ENCODE measurements at regions of chr1 and their contacts with region 1.

Region 1: GRCh38 chr1:54791880-54792522 is 9.1 kb downstream of the TTC22 start:
- DNase-seq: no peak
- H3K4me3 ChIP-seq: no peak overlapping the region
- H3K27ac ChIP-seq: no peak overlapping the region
- H3K27me3 ChIP-seq: peaks cover 22% of the 10 kb centered on the region
- CTCF ChIP-seq: peak; percentile 61

Region 2: GRCh38 chr1:54698346-54698745 is 93.7 kb before region 1 on chr1:
- CTCF ChIA-PET with region 1: no interaction called
- POLR2A ChIA-PET with region 1: no interaction called
- DNase-seq: no peak
- H3K4me3 ChIP-seq: no peak overlapping the region
- H3K27ac ChIP-seq: no peak overlapping the region
- H3K27me3 ChIP-seq: peaks cover 17% of the 10 kb centered on the region
- CTCF ChIP-seq: no peak

Region 3: DNA sequence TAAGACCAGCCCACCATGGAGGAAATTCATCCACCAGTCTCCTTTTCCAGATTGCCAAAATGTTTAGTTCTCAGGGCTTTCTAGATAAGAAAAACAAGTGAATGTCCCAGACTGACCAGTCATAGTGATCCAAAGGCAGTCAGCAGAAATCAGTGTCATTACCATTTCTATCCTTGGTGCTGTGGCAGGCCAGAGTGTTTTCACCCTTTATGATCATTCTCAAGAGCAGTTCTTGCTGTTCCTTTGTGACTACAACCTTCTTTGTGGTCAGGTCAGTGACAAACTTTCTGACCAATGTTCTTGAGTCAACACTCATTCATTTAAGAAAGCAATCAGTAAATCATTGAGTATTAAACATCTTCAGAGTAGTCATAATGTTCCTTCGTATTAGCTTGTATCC is 102.3 kb after region 1 on chr1:
- CTCF ChIA-PET with region 1: interaction called, 10 read pairs
- POLR2A ChIA-PET with region 1: no interaction called
- DNase-seq: no peak
- H3K4me3 ChIP-seq: no peak overlapping the region
- H3K27ac ChIP-seq: no peak overlapping the region
- H3K27me3 ChIP-seq: peaks cover 4% of the 10 kb centered on the region
- CTCF ChIP-seq: no peak